Right ventricle myocardium superior (tissue), 1 donor: ENCODE measurements at regions of chr3 and their contacts with region 1.

Region 1: DNA sequence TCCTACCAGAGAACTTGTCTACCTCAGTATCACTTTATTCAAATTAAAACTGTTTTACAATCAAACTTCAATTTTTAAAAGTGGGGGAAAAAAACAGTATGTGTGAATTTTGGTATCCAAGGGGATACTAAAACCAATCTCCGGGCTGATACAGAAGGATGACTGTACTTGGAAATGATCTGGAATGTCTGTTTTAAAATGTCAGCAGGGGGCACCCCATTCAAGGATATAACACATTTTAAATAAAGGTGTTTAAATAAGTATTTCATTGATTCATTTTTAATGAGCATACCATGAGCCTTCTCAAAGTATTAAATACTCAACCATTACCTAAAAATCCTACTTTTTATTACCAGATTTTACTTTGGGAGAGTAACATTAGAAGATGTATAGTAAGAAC is 67.9 kb downstream of the ULK4 start:
- DNase-seq: no peak
- ATAC-seq: no peak

Region 2: DNA sequence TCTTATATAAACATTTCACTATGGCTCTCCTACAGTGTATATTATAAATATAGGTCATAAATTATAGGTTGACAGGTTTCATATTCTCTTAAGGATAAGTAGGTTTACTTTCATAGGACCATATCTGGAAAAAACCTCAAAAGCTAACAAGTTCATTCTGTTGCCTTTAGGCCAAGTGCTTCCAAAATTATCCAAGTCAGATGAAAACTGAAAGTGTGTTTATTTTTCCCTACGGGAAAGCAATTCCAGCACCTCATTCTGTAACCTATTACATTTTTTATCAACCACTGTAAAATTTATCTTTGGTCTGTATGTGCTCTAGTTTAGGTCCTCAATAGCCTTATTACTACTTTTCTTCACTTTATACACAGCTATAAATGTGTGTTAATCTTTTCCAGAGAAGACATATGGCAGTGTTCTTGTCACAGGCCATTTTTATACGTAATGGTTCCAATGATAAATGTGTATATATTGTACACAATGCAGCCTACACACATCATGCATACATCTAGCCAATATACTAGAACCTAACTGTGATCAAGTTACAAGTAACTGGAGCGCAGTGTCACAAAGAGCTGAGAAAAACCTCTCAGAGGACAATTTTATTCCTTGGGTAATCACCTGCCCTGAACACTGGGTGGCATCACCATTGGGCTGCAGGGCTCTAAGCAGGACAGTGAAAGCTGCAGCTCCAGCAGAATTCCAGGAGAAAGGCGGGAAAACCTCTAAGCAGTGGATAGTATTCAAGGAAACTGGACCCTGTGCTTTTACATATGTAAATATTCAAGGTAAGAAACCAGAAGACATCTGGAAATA is 443.4 kb before region 1 on chr3:
- intact Hi-C with region 1: no loop called
- DNase-seq: no peak
- ATAC-seq: no peak

Region 3: DNA sequence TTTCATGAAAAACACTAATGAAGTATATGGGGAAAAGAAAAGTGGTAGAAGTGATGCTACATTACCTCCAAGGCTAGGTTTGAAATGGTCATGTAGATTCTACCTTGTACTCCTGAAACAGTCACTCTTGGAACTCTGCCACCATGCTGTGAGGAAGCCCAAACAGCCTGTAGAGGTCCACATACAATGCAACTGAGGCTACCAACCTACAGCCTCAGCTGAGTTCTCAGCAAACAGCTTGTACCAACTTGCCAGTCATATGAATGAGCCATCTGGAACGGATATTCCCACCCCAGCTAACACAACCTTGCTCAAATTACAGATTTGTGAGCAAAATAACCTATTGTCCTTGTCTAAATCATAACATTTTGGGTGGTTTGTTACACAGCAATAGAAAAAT is 125.6 kb before region 1 on chr3:
- intact Hi-C with region 1: no loop called
- DNase-seq: no peak
- ATAC-seq: no peak

Region 4: DNA sequence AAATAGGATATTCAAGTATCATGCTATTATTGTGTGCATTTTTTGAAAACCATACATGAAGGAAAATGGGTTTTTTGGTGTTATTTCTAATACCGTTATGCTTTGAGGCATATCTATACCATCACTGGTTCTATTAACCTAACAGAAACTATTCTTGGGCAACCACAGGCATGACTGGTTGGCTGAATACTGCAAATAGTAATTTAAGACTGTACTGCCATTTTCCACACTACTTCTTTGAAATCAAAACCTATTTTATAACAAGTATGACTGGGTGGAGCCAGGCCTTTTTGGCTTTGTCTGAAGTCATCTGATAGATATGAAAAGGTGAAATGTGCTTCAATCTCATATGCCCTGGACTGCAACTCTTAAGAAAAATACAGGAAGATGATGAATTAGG is 47.1 kb before region 1 on chr3:
- intact Hi-C with region 1: no loop called
- DNase-seq: no peak
- ATAC-seq: no peak

Region 5: GRCh38 chr3:42101048-42101447 is 207.1 kb after region 1 on chr3:
- intact Hi-C with region 1: loop called (anchors 10 kb)
- DNase-seq: peak; percentile 69
- ATAC-seq: peak; percentile 75

Region 6: DNA sequence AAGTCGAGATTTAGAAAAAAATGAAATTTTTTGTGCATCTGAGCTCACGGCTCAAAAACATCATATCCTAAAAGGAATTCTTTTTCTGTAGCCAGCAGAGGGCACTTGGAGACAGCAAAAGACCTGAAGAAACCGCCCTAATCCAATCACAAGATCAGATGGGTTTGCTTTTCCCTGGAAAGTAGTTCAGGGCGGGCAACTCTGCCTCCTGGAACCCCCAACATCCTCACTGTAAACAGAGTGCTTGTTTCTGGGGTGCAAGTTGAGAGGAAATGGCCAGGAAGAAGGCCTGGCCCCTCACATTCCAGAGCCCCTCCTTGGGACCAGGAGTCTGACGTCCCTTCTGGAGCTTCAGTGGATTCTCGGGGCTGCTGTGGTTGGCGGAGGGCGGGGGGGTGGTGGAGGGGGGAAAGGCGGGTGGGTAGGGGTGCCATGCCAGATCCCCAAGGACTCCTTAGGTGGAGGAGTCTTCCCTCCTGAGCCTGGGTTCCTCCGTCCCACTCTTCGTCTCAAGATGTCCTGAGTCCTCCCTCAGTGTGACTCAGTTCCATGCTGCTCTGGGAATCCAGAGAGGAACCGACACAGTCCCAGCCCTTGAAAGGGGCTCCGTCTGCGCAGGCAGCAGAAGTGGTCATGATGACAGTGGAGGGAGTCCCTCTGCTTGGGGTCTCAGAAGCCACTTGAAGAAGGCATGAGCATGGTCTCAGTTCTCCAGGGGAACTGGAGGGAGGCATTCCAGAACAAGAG is 336.1 kb after region 1 on chr3:
- intact Hi-C with region 1: loop called (anchors 10 kb)
- DNase-seq: no peak
- ATAC-seq: peak; percentile 41

Region 7: GRCh38 chr3:42443819-42444436 is 550.0 kb after region 1 on chr3:
- intact Hi-C with region 1: loop called (anchors 10 kb)
- DNase-seq: peak; percentile 89
- ATAC-seq: peak; percentile 97